ENCODE measurements at regions of chr1 and their contacts with region 1.

Region 1: GRCh38 chr1:89274411-89274857 is 1.8 kb upstream of the GBP5 start:
- DNase-seq: no peak
- ATAC-seq: peak in 1 of 2 donors; percentile 52
- H3K4me3 ChIP-seq: no peak overlapping the region
- H3K27ac ChIP-seq: no peak overlapping the region
- H3K4me1 ChIP-seq: no peaks in the 10 kb centered on the region
- H3K27me3 ChIP-seq: no peaks in the 10 kb centered on the region

Region 2: GRCh38 chr1:89198491-89199072 is 75.9 kb before region 1 on chr1 and contains the start of gene GBP4:
- intact Hi-C with region 1: loop called in 1 of 4 experiments (anchors 10 kb)
- DNase-seq: peak; percentile 32 to 72 (median 71)
- ATAC-seq: peak; percentile 82 to 84
- H3K4me3 ChIP-seq: peak within 1 kb of the TSS; percentile 94
- H3K27ac ChIP-seq: peak within 1 kb of the TSS; percentile 88
- H3K4me1 ChIP-seq: peaks cover 4% of the 10 kb centered on the region
- H3K27me3 ChIP-seq: no peaks in the 10 kb centered on the region
- total RNA-seq, gene GBP4: 4.9 to 12.7 (median 9.1) TPM

Measured in right cardiac atrium (tissue), 5 donors.